Right ventricle myocardium inferior (tissue), 1 donor: ENCODE measurements at regions of chr1 and their contacts with region 1.

Region 1: GRCh38 chr1:227728059-227728891 is 6.8 kb downstream of the JMJD4 start:
- DNase-seq: peak; percentile 84
- ATAC-seq: peak; percentile 69

Region 2: GRCh38 chr1:227489572-227489971 is 238.7 kb before region 1 on chr1:
- intact Hi-C with region 1: loop called (anchors 5 kb)
- DNase-seq: no peak
- ATAC-seq: peak; percentile 90

Region 3: GRCh38 chr1:227532019-227532619 is 196.2 kb before region 1 on chr1:
- intact Hi-C with region 1: no loop called
- DNase-seq: no peak
- ATAC-seq: no peak